ENCODE measurements at regions of chr9 and their contacts with region 1.

Region 1: DNA sequence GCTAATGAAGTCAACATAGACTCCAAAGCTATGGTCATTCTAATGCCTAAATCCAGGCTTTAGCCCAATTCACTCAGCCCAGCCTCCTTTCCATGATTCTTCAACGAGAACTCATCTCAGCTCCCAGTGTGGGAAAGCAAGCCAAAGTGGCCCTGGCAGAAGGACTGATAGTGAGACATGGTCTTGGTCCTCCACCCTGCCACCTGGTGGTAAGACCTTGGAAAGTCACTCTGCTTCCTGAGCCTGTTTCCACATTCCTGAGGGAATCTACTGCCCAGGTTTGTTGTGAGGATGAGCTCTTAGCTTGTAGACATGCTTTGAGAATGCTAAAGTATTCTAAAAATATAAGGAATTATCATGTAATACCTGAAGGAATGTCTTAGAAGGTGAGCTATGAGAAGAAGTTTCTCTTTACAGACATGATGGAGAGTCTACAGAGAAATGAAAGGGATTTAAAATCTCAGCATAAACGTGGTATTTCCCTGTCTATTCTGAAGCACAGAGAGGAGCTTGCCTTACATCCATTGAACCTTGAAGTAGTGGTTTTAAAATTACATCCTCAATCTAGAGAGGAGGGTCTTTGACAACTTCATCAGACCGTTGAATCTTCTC is 173.5 kb downstream of the TRIM32 start:
- DNase-seq: peak; percentile 76
- ATAC-seq: peak; percentile 81

Region 2: DNA sequence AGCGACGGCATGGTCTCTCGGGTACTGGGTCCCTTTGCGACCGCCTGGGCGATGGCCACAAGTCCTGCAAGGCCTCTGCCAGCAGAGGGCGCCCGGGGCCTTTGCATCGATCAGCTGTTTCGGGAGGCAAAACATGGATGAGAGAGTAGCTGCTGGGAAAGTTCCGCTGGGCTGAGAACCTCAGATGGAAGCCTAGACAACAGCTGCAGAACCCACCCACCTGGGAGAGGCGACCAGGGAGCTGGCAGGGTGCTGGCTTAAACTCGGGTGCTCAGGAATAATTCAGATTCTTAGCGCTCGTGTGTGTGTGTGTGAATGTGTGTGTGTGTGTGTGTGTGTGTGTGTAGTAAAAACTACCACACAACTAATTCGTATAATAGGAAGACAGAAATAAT is 123.5 kb before region 1 on chr9:
- intact Hi-C with region 1: loop called (anchors 2 kb)
- DNase-seq: peak; percentile 85
- ATAC-seq: peak; percentile 68

Measured in Right ventricle myocardium inferior (tissue), 1 donor.